Activated naive CD4-positive, alpha-beta T cell treated with anti-CD3 and anti-CD28 coated beads for 36 hours (primary cell): ENCODE measurements at regions of chrX and their contacts with region 1.

Region 1: GRCh38 chrX:1246816-1247215 is 21.8 kb upstream of the CSF2RA start:
- DNase-seq: peak; percentile 94
- H3K4me3 Mint-ChIP-seq: no peak overlapping the region
- H3K27ac Mint-ChIP-seq: no peak overlapping the region
- H3K4me1 Mint-ChIP-seq: peaks cover 33% of the 10 kb centered on the region
- H3K27me3 Mint-ChIP-seq: no peaks in the 10 kb centered on the region

Region 2: GRCh38 chrX:1205680-1206611 is 40.9 kb before region 1 on chrX:
- CTCF ChIA-PET with region 1: no interaction called
- intact Hi-C with region 1: loop called (anchors 1 kb)
- DNase-seq: peak; percentile 67
- H3K4me3 Mint-ChIP-seq: peak overlapping the region; percentile 72
- H3K27ac Mint-ChIP-seq: peak overlapping the region; percentile 72
- H3K4me1 Mint-ChIP-seq: peaks cover 17% of the 10 kb centered on the region
- H3K27me3 Mint-ChIP-seq: no peaks in the 10 kb centered on the region

Region 3: DNA sequence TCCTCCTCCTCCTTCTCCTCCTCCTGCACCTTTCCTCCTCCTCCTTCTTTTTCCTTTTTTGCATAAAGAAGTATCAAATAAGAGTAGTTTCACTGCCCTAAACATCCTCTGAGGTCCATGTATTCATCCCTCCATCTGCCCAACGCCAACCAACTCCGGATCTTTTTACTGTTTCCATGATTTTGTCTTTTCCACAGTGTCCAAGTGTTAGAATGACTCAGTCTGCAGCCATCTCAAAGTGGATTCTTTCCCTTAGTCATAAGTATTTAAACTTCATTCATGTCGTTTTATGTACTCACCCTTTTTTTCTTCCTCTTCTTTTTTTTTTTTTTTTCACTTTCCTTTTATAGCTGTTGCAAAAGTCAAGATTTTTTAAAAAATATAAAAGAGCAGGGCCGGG is 34.7 kb after region 1 on chrX:
- CTCF ChIA-PET with region 1: no interaction called
- intact Hi-C with region 1: no loop called
- DNase-seq: no peak
- H3K4me3 Mint-ChIP-seq: no peak overlapping the region
- H3K27ac Mint-ChIP-seq: no peak overlapping the region
- H3K4me1 Mint-ChIP-seq: no peaks in the 10 kb centered on the region
- H3K27me3 Mint-ChIP-seq: peaks cover 8% of the 10 kb centered on the region

Region 4: GRCh38 chrX:1391707-1392375 is 145.0 kb after region 1 on chrX and contains the start of gene SLC25A6:
- CTCF ChIA-PET with region 1: no interaction called
- intact Hi-C with region 1: loop called (anchors 1 kb)
- DNase-seq: peak; percentile 99
- H3K4me3 Mint-ChIP-seq: peak within 1 kb of the TSS; percentile 91
- H3K27ac Mint-ChIP-seq: peak within 1 kb of the TSS; percentile 90
- H3K4me1 Mint-ChIP-seq: peaks cover 63% of the 10 kb centered on the region
- H3K27me3 Mint-ChIP-seq: no peaks in the 10 kb centered on the region
- total RNA-seq, gene SLC25A6: 457 to 463 TPM

Region 5: DNA sequence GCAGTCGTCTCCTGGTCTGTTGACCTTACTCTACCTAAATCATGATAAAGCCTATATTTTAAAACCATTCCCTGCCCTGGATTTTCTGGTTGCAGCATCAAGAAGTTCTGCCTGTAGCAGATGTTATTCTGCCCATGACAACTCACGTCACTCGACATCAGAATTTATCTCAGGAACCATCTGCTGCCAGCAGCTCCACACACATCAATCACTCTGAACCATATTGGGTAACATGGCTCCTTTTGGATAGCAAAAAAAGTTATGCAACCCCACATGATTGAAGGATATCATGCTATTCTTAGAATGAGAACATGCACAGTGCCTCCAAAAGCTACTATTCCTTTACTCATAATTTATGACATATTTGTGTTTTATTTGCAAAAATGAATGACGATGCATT is 912.6 kb after region 1 on chrX:
- CTCF ChIA-PET with region 1: no interaction called
- intact Hi-C with region 1: no loop called
- DNase-seq: no peak
- H3K4me3 Mint-ChIP-seq: no peak overlapping the region
- H3K27ac Mint-ChIP-seq: no peak overlapping the region
- H3K4me1 Mint-ChIP-seq: no peaks in the 10 kb centered on the region
- H3K27me3 Mint-ChIP-seq: no peaks in the 10 kb centered on the region

Region 6: GRCh38 chrX:2595258-2595657 is 1348.4 kb after region 1 on chrX:
- CTCF ChIA-PET with region 1: no interaction called
- intact Hi-C with region 1: loop called (anchors 1 kb)
- DNase-seq: no peak
- H3K4me3 Mint-ChIP-seq: no peak overlapping the region
- H3K27ac Mint-ChIP-seq: no peak overlapping the region
- H3K4me1 Mint-ChIP-seq: no peaks in the 10 kb centered on the region
- H3K27me3 Mint-ChIP-seq: no peaks in the 10 kb centered on the region